Endothelial cell of umbilical vein (primary cell): ENCODE measurements at regions of chr3 and their contacts with region 1.

Region 1: DNA sequence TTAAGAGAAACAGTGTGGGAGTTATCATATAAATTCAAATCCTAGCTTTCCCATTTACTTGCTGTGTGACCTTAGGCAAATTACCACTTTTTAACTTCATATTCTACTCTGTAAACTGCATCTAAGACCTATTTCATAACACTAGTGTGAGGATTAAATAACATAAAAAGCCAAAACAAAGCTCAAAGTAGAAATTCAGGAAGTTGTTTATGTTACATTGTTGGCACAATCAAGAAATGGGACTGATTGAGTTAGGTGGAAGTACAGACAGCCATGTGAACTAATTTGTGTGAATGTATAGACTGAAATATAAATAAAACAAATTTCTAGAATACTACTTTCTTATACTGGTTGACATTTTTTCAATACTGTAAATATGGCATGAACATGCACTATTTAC is 131.7 kb downstream of the STAG1 start:
- DNase-seq: no peak
- H3K4me3 ChIP-seq: no peak overlapping the region
- H3K27ac ChIP-seq: no peak overlapping the region
- H3K4me1 ChIP-seq: no peaks in the 10 kb centered on the region
- H3K27me3 ChIP-seq: no peaks in the 10 kb centered on the region
- CTCF ChIP-seq: no peak
- POLR2A ChIP-seq: no peak

Region 2: DNA sequence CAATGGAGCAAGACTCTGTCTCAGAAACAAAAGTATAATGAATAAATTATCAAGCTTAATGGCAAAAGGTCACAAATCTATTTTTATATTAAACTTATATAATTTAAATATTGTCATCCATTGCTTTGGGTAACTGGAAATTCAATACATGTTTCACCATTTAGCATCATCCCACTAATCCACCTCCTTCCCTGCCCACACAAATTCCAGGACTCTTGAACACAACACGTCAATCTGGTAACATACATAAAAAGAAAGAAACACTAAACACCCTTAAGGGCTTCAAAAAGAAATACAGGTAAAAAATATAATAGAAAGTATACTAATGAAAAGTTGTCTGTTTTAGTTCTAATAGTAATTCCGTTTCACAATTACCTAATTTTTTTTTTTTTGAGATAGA is 17.6 kb before region 1 on chr3:
- CTCF ChIA-PET with region 1: interaction called, 3 read pairs
- POLR2A ChIA-PET with region 1: interaction called, 5 read pairs
- dilution Hi-C with region 1: no loop called
- intact Hi-C with region 1: loop called (anchors 1 kb)
- DNase-seq: no peak
- H3K4me3 ChIP-seq: no peak overlapping the region
- H3K27ac ChIP-seq: no peak overlapping the region
- H3K4me1 ChIP-seq: peaks cover 6% of the 10 kb centered on the region
- H3K27me3 ChIP-seq: no peaks in the 10 kb centered on the region
- CTCF ChIP-seq: no peak
- POLR2A ChIP-seq: no peak